ENCODE measurements at regions of chr13 and their contacts with region 1.

Region 1: GRCh38 chr13:76594435-76594834 is 291.8 kb downstream of the KCTD12 start:
- DNase-seq: no peak
- H3K4me3 ChIP-seq: no peak overlapping the region
- H3K27ac ChIP-seq: no peak overlapping the region
- H3K4me1 ChIP-seq: no peaks in the 10 kb centered on the region
- H3K27me3 ChIP-seq: no peaks in the 10 kb centered on the region
- CTCF ChIP-seq: no peak
- POLR2A ChIP-seq: no peak

Region 2: GRCh38 chr13:76560791-76561190 is 33.6 kb before region 1 on chr13:
- CTCF ChIA-PET with region 1: no interaction called
- POLR2A ChIA-PET with region 1: no interaction called
- dilution Hi-C with region 1: no loop called
- intact Hi-C with region 1: loop called (anchors 2 kb)
- DNase-seq: no peak
- H3K4me3 ChIP-seq: no peak overlapping the region
- H3K27ac ChIP-seq: no peak overlapping the region
- H3K4me1 ChIP-seq: no peaks in the 10 kb centered on the region
- H3K27me3 ChIP-seq: no peaks in the 10 kb centered on the region
- CTCF ChIP-seq: no peak
- POLR2A ChIP-seq: no peak

Measured in endothelial cell of umbilical vein (primary cell).